ENCODE measurements at regions of chr3 and their contacts with region 1.

Region 1: GRCh38 chr3:42749753-42750231 is 23.3 kb downstream of the CCDC13 start:
- DNase-seq: peak; percentile 6
- H3K4me3 ChIP-seq: no peak overlapping the region
- H3K27ac ChIP-seq: no peak overlapping the region
- H3K4me1 ChIP-seq: no peaks in the 10 kb centered on the region
- CTCF ChIP-seq: peak; percentile 69

Region 2: DNA sequence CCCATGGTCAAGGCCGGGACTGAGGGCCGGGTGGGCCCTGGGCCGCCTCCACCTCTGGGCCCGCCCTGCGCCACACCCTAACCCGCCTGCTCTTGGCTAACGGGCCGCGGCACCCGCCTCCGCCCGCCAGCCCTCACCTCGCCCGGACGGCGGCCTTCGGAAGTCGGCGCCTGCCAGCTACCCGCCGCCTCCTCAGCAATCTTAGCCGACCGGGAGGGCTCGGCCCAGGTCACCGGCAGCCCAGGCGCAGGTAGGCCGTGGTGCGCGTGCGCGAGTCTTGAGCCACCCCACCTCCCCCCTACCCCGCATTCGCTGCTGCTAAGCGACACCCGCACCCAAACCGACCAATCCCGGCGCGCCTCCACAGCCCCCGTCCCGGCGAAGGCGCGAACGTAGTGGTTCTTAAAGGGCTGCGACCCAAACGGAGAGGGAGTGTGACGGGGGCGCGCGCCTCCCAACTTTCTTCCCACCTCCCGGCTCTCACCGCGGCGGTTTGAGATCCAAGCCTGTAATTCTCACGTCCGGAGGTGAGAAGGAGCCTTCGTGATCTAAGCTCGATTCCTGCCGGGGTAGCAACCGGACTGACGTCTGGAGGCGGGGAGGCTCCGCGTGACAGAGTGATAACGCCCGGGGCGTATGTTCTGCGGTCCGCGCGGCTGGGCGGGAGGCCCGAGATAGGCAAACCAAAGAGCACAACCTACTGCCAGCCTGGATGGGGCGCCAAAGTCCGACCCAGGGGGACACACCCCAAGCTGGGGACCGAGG is 167.9 kb before region 1 on chr3 and contains the start of gene SEC22C:
- CTCF ChIA-PET with region 1: interaction called, 3 read pairs
- POLR2A ChIA-PET with region 1: interaction called, 4 read pairs
- intact Hi-C with region 1: loop called (anchors 2 kb)
- DNase-seq: peak; percentile 96
- H3K4me3 ChIP-seq: peak within 1 kb of the TSS; percentile 94
- H3K27ac ChIP-seq: peak within 1 kb of the TSS; percentile 74
- H3K4me1 ChIP-seq: peaks cover 27% of the 10 kb centered on the region
- CTCF ChIP-seq: peak; percentile 77
- total RNA-seq, gene SEC22C: 30.0 and 33.0 TPM in 2 replicates

Region 3: GRCh38 chr3:42652611-42653302 is 97.0 kb before region 1 on chr3:
- CTCF ChIA-PET with region 1: no interaction called
- POLR2A ChIA-PET with region 1: no interaction called
- intact Hi-C with region 1: loop called (anchors 10 kb)
- DNase-seq: peak; percentile 42
- H3K4me3 ChIP-seq: no peak overlapping the region
- H3K27ac ChIP-seq: no peak overlapping the region
- H3K4me1 ChIP-seq: peaks cover 5% of the 10 kb centered on the region
- CTCF ChIP-seq: no peak

Measured in OCI-LY7 (cell line).